GM10248 (cell line): ENCODE measurements at regions of chr20 and their contacts with region 1.

Region 1: DNA sequence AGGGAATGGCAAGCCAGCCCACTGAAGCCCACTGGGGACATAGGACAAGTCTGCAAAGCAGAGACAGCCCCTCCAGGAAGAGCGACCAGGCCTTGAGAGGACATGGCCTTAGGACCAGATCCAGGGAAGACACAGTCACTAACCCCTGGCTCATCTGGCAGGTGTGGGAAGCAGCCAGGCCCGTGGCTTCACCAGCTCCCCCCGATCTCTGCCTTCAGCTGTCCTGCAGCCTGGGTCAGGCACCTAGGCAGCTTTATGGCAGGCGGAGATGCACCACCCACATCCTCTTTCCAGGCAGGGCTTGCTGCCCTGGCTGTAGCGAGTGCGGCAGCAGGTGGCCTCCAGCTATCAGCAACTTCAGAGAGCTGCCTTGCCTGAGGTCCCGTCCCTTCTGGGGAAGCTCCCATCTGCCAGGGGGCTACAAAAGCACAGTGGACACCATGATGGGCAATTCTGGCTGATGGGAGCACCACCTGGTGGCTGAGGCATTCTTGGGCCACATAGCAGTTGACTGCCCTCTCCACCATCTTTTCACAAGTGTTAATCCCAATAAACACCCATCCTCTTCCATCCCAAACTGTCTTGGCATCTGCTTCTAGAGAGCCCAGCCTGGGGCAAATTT is 85.8 kb downstream of the DZANK1 start:
- DNase-seq: no peak
- CTCF ChIP-seq: no peak

Region 2: GRCh38 chr20:16599257-16599656 is 1781.8 kb before region 1 on chr20:
- CTCF ChIA-PET with region 1: no interaction called
- POLR2A ChIA-PET with region 1: interaction called, 12 read pairs
- DNase-seq: no peak
- CTCF ChIP-seq: no peak

Region 3: GRCh38 chr20:18363708-18364390 is 17.2 kb before region 1 on chr20:
- CTCF ChIA-PET with region 1: no interaction called
- POLR2A ChIA-PET with region 1: no interaction called
- DNase-seq: no peak
- CTCF ChIP-seq: no peak